ENCODE measurements at regions of chr7 and their contacts with region 1.

Region 1: DNA sequence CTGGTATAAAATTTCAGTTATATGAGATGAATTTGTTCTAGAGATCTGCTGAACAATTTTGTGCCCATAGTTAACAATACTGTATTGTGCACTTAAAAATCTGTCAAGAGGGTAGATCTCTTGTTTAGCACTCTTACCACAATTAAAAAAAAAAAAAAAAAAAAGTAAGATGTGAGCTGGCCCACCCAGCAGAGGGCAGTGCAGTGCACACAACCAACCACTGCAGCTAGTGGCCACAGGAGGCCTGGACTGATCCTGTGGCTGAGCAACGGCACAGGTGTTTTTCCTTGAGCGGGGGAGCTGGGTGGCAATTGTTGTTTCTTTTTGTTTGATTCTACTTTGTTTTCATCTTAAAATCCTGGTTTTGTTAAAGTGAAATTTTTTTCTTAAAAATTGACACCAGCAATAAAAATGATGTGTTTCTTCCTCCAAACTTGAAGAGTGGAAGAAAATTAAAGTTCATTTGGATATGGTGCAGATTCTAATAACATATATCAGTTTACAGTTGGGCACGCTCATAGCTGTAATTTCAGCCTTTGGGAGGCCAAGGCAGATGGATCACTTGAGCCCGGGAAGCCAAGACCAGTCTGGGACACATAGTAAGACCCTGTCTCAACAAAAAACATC is 171.1 kb upstream of the TBX20 start:
- DNase-seq: peak; percentile 55
- ATAC-seq: peak; percentile 91
- H3K4me3 ChIP-seq: no peak overlapping the region
- H3K27ac ChIP-seq: no peak overlapping the region
- H3K4me1 ChIP-seq: no peaks in the 10 kb centered on the region
- H3K27me3 ChIP-seq: peaks cover 21% of the 10 kb centered on the region; the same call in 1 of the 2 replicates
- CTCF ChIP-seq: peak; percentile 73

Region 2: DNA sequence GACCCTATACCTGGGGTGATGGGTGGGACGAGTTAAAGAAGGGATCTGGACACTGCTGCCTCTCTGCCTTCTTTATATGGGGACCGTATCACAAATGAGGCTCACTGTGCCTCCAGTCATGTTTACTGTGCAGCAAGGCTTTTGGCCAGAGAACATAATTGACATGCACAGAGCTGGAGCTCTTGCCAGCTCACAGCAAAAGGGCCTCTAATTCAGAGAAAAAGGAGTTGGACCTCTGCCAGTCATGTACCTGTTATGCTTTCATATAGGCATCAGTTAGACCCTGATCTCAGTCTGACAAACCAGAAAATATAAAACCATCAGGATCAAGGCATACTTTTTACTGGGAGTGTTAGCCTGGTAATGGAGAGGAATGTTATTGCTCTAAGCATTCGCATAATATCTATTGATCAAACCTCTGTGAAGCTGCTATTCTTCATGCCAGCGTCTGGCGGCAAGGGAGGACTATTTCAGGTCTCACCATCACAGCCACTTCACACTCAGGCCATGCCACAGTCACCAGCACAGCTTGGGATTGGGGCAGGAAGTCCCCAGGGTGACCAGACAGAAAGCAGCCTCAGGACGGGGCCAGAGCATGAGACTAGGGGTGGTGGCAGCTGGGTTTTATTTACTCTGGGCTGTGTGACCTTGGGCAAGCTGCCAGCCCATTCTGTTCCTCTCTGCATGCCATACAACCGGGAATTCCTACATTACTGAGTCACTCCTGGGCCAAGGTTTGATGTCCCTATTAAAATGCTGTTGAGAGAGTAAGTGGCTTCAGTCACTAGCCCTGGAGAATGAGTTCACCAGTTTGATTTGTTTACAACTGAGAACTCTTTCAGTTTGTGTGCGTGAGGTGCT is 676.9 kb before region 1 on chr7:
- CTCF ChIA-PET with region 1: no interaction called
- POLR2A ChIA-PET with region 1: no interaction called
- intact Hi-C with region 1: no loop called
- DNase-seq: peak; percentile 97
- ATAC-seq: peak; percentile 94
- H3K4me3 ChIP-seq: peak overlapping the region; percentile 33; the same call in 1 of the 2 replicates
- H3K27ac ChIP-seq: peak overlapping the region; percentile 62
- H3K4me1 ChIP-seq: peaks cover 20% of the 10 kb centered on the region
- H3K27me3 ChIP-seq: no peaks in the 10 kb centered on the region
- CTCF ChIP-seq: no peak

Region 3: DNA sequence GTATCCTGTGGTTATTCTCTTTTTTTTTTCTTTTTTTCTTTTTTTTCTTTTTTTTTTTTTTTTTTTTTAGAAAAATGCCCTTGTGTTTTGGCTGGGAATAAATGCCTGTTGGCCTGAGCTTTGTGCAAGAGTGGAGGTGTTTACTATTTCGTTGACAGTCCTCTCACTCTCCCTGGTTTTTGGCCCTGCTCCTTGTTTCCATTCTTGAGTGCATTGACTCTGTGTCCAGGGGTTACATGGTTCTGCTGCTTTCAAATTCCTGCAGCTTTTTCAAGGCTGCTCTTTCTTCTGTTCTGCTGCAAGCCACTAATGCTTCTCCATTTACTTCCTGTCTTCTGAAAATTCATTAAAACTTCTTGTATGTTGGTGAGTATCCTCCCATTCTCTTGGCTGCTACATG is 111.4 kb before region 1 on chr7:
- CTCF ChIA-PET with region 1: interaction called, 12 read pairs
- POLR2A ChIA-PET with region 1: no interaction called
- intact Hi-C with region 1: no loop called
- DNase-seq: no peak
- ATAC-seq: no peak
- H3K4me3 ChIP-seq: no peak overlapping the region
- H3K27ac ChIP-seq: no peak overlapping the region
- H3K4me1 ChIP-seq: no peaks in the 10 kb centered on the region
- H3K27me3 ChIP-seq: 0 out of 2 replicates have a peak, but pooled peaks cover 4% of the 10 kb centered on the region
- CTCF ChIP-seq: no peak

Region 4: GRCh38 chr7:35519971-35520809 is 95.2 kb after region 1 on chr7:
- CTCF ChIA-PET with region 1: interaction called, 6 read pairs
- POLR2A ChIA-PET with region 1: no interaction called
- intact Hi-C with region 1: loop called (anchors 1 kb)
- DNase-seq: peak; percentile 81
- ATAC-seq: peak; percentile 74
- H3K4me3 ChIP-seq: no peak overlapping the region
- H3K27ac ChIP-seq: no peak overlapping the region
- H3K4me1 ChIP-seq: peaks cover 16% of the 10 kb centered on the region
- H3K27me3 ChIP-seq: peaks cover 28% of the 10 kb centered on the region
- CTCF ChIP-seq: peak; percentile 89

Region 5: DNA sequence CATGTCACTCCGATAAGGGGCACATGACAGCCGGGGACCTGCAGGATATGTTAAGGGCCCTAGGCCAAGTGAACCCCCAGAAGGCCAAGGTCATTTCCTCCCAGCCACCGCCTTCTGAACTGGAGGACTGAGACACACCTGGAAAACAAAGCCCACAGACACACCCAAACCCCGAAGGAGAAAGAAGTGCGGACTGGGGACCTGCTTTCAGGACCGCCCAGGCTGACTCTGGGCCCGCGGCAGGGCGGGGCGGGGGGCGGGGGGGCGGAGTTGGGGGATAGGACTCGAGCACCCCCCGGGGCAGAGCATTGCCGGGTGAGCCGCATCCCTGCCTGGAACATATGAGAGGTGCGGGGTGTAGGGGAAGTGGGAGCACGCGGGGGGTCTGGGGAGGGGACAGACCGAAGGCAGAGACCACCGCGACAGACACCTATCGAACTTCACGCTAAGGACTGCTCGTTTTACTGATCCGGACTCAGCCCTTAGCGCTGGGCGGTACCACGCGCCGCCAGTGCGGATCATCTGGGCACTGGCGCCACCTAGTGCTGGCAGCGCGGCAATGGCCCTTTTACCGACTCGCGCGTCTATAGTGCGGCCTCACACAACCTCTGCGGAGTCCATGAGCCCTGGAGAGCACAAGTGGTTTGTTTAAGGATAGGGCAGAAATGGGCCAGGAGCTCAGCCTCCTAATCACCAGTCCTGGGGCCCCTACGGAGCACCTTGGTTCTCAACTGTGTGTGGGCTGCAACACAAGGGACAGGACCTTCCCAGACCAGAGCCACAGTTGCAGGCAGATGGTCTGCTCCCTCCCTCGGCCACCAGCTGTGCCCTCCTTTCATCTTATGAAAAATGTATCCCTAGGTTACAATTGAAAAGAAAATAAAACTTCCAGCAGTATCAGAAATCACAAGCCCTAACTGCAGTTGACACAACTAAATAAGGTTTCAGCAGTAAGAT is 112.4 kb after region 1 on chr7:
- CTCF ChIA-PET with region 1: no interaction called
- POLR2A ChIA-PET with region 1: no interaction called
- intact Hi-C with region 1: loop called (anchors 1 kb)
- DNase-seq: peak; percentile 80
- ATAC-seq: peak; percentile 98
- H3K4me3 ChIP-seq: peak overlapping the region; percentile 53; the same call in 1 of the 2 replicates
- H3K27ac ChIP-seq: no peak overlapping the region
- H3K4me1 ChIP-seq: peaks cover 8% of the 10 kb centered on the region; the same call in 1 of the 2 replicates
- H3K27me3 ChIP-seq: peaks cover 12% of the 10 kb centered on the region; the same call in 1 of the 2 replicates
- CTCF ChIP-seq: peak; percentile 85

Region 6: DNA sequence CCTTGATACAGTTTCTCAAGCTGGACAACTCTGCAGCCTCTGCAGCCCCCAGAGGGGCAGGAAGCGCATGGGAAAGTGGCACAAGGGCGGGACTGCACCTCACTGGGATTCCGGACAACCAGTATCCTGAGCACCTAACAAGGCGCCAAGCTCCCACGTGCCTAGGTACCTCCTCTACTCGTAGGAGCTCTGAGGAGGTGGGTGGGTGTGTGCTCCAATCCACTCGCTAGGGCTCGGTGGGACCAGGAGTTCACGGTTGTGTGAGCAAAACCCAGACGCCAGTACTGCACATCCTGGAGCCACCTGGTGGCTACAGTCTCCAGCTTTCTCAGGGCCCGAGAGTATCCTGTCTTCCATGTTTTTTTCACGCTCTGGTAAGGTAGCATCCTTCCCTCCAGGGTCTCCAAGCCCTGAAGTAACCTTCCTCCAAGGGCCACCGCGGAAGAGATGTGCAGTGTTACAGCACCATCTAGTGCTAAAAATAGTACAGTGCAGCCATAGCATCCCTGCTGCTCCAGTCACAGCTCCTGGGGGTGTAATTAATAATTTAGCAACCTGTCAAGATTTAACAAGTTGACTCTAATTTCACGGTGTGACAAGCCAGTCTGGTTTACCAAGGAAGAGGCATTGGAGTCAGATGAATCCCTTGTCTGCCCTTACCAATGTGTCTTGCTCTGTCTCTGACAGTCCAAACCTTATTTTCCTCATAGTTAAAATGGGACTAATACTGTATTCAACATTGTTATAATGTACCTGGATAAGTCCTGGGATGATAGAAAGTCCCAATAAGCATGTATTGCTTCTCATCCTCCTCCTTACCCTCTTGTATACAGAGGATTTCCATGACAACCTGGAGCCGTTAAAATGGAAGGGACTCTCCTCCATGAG is 199.6 kb after region 1 on chr7:
- CTCF ChIA-PET with region 1: no interaction called
- POLR2A ChIA-PET with region 1: no interaction called
- intact Hi-C with region 1: loop called (anchors 2 kb)
- DNase-seq: peak; percentile 56
- ATAC-seq: peak; percentile 73
- H3K4me3 ChIP-seq: no peak overlapping the region
- H3K27ac ChIP-seq: no peak overlapping the region
- H3K4me1 ChIP-seq: no peaks in the 10 kb centered on the region
- H3K27me3 ChIP-seq: no peaks in the 10 kb centered on the region
- CTCF ChIP-seq: peak; percentile 87

Region 7: GRCh38 chr7:35906191-35906908 is 481.4 kb after region 1 on chr7:
- CTCF ChIA-PET with region 1: no interaction called
- POLR2A ChIA-PET with region 1: no interaction called
- intact Hi-C with region 1: loop called (anchors 10 kb)
- DNase-seq: peak; percentile 81
- ATAC-seq: peak; percentile 91
- H3K4me3 ChIP-seq: no peak overlapping the region
- H3K27ac ChIP-seq: no peak overlapping the region
- H3K4me1 ChIP-seq: no peaks in the 10 kb centered on the region
- H3K27me3 ChIP-seq: no peaks in the 10 kb centered on the region
- CTCF ChIP-seq: peak; percentile 88

Measured in PC-3 (cell line).